ENCODE measurements at regions of chr1 and their contacts with region 1.

Region 1: DNA sequence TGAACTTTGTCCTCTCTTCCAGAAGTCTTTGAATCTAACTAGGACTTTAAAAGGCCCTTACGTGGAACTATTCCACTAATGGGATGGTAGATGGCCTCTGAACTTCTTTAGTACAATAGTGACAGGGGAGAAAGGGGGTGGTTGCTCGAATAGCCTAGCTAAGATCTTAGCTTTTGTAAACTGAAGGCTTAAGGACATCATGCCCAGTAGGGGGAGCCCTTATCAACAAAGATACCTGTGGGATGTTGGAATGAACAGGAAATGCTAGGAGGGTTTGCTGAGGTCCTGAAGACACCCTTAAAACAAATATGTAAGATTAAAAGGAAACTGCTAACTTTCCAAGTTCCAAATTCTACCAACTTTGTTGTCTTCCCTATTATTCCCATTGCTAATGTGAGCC is 33.2 kb downstream of the NHLH2 start:
- DNase-seq: no peak
- H3K4me3 ChIP-seq: no peak overlapping the region
- H3K27ac ChIP-seq: no peak overlapping the region
- H3K4me1 ChIP-seq: peaks cover 0 to 10% (median 3%) of the 10 kb centered on the region in 6 donors
- H3K27me3 ChIP-seq: no peaks in the 10 kb centered on the region
- CTCF ChIP-seq: peak in 10 of 11 experiments; percentile 27 to 77 (median 64)
- POLR2A ChIP-seq: no peak

Region 2: DNA sequence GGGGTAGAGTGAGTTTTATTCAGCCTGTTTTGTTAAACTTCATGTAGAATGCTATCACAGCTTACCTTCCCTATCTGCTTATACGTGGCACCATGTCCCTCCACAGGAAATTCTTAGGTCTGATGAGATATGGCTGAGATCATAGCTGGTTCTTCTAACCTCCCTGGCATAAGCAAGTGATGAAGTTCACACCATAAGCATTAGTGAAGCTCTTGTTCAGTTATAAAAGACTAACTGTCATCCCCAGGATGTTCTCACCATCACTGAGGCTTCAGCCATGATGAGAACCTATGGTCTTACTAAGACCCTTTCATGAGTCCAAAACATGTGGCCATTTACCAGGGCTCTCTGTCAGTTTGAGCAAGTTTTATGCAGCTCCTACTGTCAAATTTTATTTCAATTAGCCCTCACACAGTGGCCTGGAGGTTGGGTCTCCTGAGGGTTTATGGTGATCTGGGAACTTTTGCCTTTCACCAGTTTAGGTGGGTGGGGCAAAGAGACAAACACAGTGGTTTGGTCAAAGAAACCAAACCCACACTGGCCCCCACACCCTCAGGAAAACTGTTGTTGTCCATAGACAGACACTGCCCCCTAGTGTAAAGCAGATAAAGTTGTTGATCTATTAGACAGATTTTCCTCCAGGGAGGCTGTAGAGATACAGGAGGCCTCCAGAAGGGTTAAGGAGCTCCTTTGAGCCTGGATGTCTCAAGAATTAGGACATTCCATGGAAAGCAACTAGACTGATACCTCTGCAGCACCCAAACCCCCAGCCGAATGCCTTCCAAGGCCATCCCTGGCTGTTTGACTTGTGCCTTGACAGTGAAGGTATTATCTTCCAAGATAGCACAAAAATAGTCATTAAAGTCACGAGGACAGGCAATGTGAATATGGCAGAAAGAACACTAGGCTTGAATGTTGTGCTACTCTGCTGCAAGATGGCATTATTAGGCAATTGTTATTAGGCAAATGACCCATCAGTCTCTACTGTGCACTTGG is 173.6 kb after region 1 on chr1:
- intact Hi-C with region 1: loop called (anchors 5 kb)
- DNase-seq: no peak
- H3K4me3 ChIP-seq: no peak overlapping the region
- H3K27ac ChIP-seq: peak overlapping the region in 3 of 8 donors; percentile 5 to 58 (median 14)
- H3K4me1 ChIP-seq: peaks cover 0 to 66% (median 12%) of the 10 kb centered on the region in 6 donors
- H3K27me3 ChIP-seq: peaks cover 0 to 8% (median 4%) of the 10 kb centered on the region in 7 donors
- CTCF ChIP-seq: peak in 9 of 11 experiments; percentile 15 to 69 (median 60)
- POLR2A ChIP-seq: no peak